GM23248 (cell line): ENCODE measurements at regions of chr2 and their contacts with region 1.

Region 1: DNA sequence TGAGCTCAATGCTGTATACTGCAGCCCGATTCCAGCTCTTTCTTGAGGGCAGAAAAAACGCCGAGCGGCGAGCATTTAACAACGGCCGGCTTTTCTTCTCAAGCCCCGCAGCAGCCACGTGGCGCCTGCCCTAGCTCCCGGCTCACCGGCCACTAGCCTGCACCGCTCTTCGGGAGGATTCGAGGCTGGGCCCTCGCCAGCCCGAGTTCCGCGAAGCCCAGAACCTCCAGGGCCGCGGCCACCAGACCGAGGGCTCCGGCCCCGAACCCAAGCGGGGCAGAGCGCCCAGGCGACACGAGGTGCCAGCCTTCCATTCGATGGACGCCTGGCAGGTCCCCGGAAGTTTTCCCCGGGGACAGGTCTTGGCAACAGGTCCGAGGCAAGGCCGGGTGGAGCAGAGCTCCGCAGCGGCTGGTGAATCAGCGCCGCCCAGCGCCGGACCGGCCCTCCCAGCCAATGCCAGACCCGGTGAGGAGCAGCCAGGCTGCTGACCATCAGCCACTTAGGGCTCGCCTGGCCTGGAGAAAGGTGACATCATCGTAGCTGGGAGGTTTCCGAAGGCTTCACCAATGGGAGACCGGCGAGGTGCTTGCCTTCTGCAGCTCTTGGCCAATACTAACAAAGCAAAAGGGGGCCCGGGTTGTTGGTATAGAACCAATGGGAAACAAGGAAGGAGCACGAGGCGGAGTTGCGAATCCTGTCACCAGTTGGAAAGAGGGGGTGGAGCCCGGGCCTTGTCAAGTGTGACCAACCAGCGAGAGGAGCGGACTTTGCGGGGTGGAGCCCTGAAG is 544 bp upstream of the MXD1 start:
- DNase-seq: peak; percentile 100
- H3K4me3 ChIP-seq: peak overlapping the region; percentile 85
- H3K27ac ChIP-seq: peak overlapping the region; percentile 95
- H3K4me1 ChIP-seq: peaks cover 28% of the 10 kb centered on the region
- H3K27me3 ChIP-seq: no peaks in the 10 kb centered on the region

Region 2: DNA sequence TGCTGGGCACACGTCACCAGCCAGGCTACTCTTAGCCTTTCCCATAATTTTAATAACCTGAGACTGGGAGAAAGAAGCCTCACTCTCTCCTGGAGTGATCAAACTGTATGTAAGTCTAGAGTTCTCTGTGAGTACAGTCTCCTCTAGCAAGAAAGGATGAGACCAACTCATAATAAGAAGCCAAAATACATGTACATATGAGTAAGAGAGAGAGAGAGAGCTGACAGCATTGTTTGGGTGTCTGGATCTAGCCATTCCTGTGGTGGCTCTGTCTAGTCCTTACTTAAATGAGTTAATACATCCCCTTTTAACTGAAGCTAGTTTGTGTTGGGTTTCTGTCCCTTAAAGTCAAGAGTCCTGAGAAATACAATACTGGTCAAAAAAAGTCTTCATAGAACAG is 198.4 kb before region 1 on chr2:
- in situ Hi-C with region 1: no loop called
- DNase-seq: peak; percentile 73
- H3K4me3 ChIP-seq: no peak overlapping the region
- H3K27ac ChIP-seq: peak overlapping the region; percentile 2; the same call in 1 of the 2 replicates
- H3K4me1 ChIP-seq: peaks cover 9% of the 10 kb centered on the region
- H3K27me3 ChIP-seq: no peaks in the 10 kb centered on the region

Region 3: DNA sequence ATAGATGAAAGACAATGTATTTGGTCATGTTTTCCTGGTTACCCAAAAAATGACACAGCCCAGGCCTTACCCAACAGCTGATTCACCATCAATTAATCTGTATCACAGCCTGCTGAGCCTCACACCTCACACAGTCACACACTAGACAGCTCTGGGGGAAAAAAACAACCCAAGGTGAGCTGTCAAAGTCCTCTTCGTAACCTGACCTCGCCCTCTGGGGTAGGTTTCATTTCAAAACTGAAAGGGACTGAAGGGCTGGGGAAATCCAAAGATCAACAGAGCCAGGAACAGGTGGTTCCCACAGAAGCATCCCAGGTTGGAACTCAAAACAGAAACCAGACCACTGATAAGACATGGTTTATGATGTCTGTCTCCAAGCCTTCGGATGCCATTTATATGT is 154.7 kb after region 1 on chr2:
- in situ Hi-C with region 1: loop called (anchors 5 kb)
- DNase-seq: peak; percentile 74
- H3K4me3 ChIP-seq: no peak overlapping the region
- H3K27ac ChIP-seq: peak overlapping the region; percentile 58
- H3K4me1 ChIP-seq: peaks cover 13% of the 10 kb centered on the region
- H3K27me3 ChIP-seq: no peaks in the 10 kb centered on the region

Region 4: GRCh38 chr2:70142590-70143313 is 228.4 kb after region 1 on chr2:
- in situ Hi-C with region 1: loop called (anchors 10 kb)
- DNase-seq: peak; percentile 100
- H3K4me3 ChIP-seq: peak overlapping the region; percentile 77
- H3K27ac ChIP-seq: peak overlapping the region; percentile 96
- H3K4me1 ChIP-seq: peaks cover 6% of the 10 kb centered on the region
- H3K27me3 ChIP-seq: no peaks in the 10 kb centered on the region

Region 5: GRCh38 chr2:70258532-70258874 is 344.1 kb after region 1 on chr2:
- in situ Hi-C with region 1: loop called (anchors 25 kb)
- DNase-seq: peak; percentile 71
- H3K4me3 ChIP-seq: peak overlapping the region; percentile 75
- H3K27ac ChIP-seq: peak overlapping the region; percentile 90
- H3K4me1 ChIP-seq: peaks cover 5% of the 10 kb centered on the region; the same call in 1 of the 2 replicates
- H3K27me3 ChIP-seq: no peaks in the 10 kb centered on the region

Region 6: GRCh38 chr2:71358931-71359671 is 1444.7 kb after region 1 on chr2:
- in situ Hi-C with region 1: no loop called
- DNase-seq: peak; percentile 93
- H3K4me3 ChIP-seq: no peak overlapping the region
- H3K27ac ChIP-seq: peak overlapping the region; percentile 35
- H3K4me1 ChIP-seq: peaks cover 6% of the 10 kb centered on the region
- H3K27me3 ChIP-seq: no peaks in the 10 kb centered on the region